Natural killer cell (primary cell): ENCODE measurements at regions of chr22 and their contacts with region 1.

Region 1: DNA sequence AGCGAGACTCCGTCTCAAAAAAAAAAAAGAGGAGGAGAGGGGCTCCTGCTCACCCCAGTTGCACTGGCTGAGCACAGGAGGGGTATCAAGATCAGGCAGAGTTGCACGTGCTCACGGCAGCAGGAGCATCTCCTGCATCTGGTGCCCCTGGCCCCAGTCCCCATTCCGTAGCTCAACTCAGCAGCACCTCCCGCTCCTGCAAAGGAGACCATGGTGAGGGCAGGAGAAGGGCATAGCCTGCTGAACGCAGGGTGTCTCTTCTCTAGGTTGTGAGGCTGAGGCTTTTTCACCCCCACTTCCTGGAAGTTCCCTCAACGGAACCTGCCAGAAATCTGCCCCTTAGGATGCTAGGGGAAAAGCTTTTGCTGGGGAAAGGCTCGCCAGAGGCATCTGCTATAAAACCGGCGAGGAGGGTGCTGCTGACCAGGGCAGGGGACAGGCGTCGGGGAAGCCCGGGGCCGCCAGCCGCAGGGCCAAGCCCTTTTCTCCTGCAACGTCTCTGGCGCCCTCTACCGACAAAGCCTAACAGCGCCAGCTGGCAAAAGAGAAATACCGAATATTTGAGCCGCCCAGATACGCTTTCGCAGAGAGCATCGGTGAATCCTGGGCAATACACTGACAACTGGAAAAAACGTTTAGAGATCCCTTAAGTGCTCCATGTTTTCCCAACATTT is 1.0 kb upstream of the PPP6R2 start:
- DNase-seq: peak; percentile 84 to 93
- ATAC-seq: peak; percentile 62 to 77 (median 66)
- H3K4me3 ChIP-seq: peak overlapping the region; percentile 56
- H3K4me3 Mint-ChIP-seq: peak overlapping the region; percentile 83
- H3K27ac ChIP-seq: peak overlapping the region; percentile 68
- H3K27ac Mint-ChIP-seq: no peak overlapping the region
- H3K4me1 ChIP-seq: peaks cover 29% of the 10 kb centered on the region
- H3K4me1 Mint-ChIP-seq: peaks cover 0 to 12% of the 10 kb centered on the region in 2 donors
- H3K27me3 ChIP-seq: no peaks in the 10 kb centered on the region
- H3K27me3 Mint-ChIP-seq: no peaks in the 10 kb centered on the region
- CTCF ChIP-seq: peak; percentile 98

Region 2: DNA sequence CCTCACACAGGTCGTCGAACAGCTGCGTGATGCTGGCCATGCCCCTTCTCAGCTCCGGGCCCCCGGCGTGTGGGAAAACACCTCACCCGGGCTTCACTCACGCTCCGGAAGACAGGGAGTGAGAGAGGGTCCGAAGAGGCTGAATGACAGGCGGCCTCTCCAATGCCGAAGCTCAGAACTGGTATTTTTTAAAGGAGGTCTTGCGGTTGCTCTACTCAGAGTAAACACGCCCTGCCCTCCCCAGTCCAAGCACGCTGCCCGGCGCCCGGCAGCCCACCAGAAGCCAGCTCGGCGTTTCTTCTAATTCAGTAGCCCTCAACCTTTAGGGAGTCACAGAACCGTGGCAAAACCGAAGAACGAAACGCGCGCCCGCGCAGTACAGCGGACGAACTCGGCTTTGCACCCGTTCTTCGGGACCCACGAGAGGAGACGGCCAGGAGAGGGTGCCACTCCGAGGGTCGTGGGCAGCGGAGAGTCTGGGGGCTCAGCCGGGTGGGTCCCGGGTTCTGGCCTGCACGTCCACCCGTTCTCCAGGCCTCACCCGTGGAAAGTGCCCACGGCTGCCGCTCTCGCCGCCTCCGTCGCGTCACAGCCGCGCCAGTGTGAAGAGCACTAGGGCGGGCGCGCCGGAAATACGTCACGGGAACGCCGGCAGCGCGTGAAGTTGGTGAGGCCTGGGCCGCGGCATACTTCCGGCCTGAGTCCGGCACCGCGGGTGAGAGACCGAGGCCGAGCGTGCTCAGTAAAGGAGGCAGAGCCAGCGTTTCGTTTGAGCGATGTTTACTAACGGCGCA is 97.5 kb before region 1 on chr22 and contains the start of gene TUBGCP6:
- intact Hi-C with region 1: loop called (anchors 1 kb)
- DNase-seq: peak; percentile 94 to 96
- ATAC-seq: peak; percentile 78 to 91 (median 81)
- H3K4me3 ChIP-seq: peak within 1 kb of the TSS; percentile 66
- H3K4me3 Mint-ChIP-seq: peak within 1 kb of the TSS; percentile 99
- H3K27ac ChIP-seq: peak within 1 kb of the TSS; percentile 87
- H3K27ac Mint-ChIP-seq: peak within 1 kb of the TSS; percentile 96 to 98
- H3K4me1 ChIP-seq: peaks cover 73% of the 10 kb centered on the region
- H3K4me1 Mint-ChIP-seq: peaks cover 23 to 34% of the 10 kb centered on the region in 2 donors
- H3K27me3 ChIP-seq: no peaks in the 10 kb centered on the region
- H3K27me3 Mint-ChIP-seq: no peaks in the 10 kb centered on the region
- CTCF ChIP-seq: no peak
- total RNA-seq, gene TUBGCP6: 105 to 126 (median 118) TPM

Region 3: DNA sequence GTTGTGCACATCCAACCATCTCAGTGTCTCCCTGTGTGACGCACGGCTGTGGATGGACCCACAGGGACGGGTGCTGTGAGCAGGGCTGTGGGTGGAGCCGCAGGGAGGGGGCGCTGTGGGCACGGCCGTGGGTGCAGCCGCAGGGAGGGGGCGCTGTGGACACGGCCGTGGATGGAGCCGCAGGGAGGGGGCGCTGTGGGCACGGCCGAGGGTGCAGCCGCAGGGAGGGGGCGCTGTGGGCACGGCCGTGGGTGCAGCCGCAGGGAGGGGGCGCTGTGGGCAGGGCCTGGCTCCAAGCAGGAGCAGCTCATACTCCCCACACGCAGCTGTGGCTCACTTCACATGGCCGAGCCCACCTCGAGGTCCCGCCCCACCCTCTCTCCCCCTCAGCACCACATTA is 66.0 kb before region 1 on chr22:
- intact Hi-C with region 1: loop called (anchors 5 kb)
- DNase-seq: peak in 1 of 2 donors; percentile 77
- ATAC-seq: peak; percentile 39 to 82 (median 69)
- H3K4me3 ChIP-seq: no peak overlapping the region
- H3K4me3 Mint-ChIP-seq: no peak overlapping the region
- H3K27ac ChIP-seq: no peak overlapping the region
- H3K27ac Mint-ChIP-seq: no peak overlapping the region
- H3K4me1 ChIP-seq: peaks cover 11% of the 10 kb centered on the region
- H3K4me1 Mint-ChIP-seq: peaks cover 4 to 6% of the 10 kb centered on the region in 2 donors
- H3K27me3 ChIP-seq: peaks cover 4% of the 10 kb centered on the region
- H3K27me3 Mint-ChIP-seq: peaks cover 6 to 7% of the 10 kb centered on the region in 2 donors
- CTCF ChIP-seq: no peak

Region 4: DNA sequence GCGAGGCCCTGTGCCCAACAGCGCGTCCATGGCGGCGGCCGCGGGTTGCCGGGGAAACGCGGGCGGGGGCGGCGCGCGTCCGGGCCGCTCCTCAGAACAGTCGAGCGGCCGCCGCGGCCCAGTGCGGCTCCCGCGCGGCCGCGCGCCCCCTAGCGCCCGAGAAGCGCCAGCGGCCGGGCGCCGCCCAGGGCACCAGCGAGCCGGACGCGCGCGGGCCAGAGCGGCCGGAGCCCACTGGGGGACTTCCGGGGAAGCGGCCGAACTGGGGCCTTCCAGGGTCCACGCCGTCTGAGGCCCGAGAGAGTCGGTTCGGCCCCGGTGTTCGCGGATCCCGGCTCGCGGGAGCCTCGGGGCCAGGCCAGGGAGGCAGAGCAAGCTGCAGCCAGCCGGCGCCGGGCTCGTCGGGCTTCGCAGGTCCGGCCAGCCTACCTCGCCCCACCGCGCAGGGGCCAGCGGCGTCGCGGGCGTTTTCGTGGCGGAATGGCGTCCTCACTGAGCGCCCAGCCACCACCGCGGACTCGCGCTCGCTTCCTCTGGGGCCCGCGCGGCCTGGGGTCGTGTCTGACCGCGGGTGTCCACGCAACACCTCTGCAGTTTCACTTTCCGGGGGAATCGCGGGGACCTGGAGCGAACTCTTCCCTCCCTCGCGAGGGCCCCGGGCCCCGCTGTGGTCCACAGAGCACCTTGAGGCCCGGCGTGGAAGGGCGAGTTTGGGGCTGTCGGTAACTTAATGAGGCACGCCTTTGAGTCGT is 15.0 kb before region 1 on chr22 and contains the start of gene DENND6B:
- intact Hi-C with region 1: loop called (anchors 2 kb)
- DNase-seq: peak; percentile 71 to 87
- ATAC-seq: peak; percentile 94 to 97 (median 96)
- H3K4me3 ChIP-seq: peak within 1 kb of the TSS; percentile 60
- H3K4me3 Mint-ChIP-seq: peak within 1 kb of the TSS; percentile 89
- H3K27ac ChIP-seq: peak within 1 kb of the TSS; percentile 88
- H3K27ac Mint-ChIP-seq: peak within 1 kb of the TSS; percentile 54 to 81
- H3K4me1 ChIP-seq: peaks cover 17% of the 10 kb centered on the region
- H3K4me1 Mint-ChIP-seq: peaks cover 0 to 13% of the 10 kb centered on the region in 2 donors
- H3K27me3 ChIP-seq: no peaks in the 10 kb centered on the region
- H3K27me3 Mint-ChIP-seq: no peaks in the 10 kb centered on the region
- CTCF ChIP-seq: peak; percentile 50
- total RNA-seq, gene DENND6B: 3.1 to 5.0 (median 4.5) TPM